GM12878 (cell line): ENCODE measurements at regions of chr7 and their contacts with region 1.

Region 1: GRCh38 chr7:49001610-49002033 is 77.3 kb downstream of the CDC14C start:
- DNase-seq: peak; percentile 24
- ATAC-seq: peak; percentile 99
- H3K4me3 ChIP-seq: no peak overlapping the region
- H3K27ac ChIP-seq: no peak overlapping the region
- H3K4me1 ChIP-seq: no peaks in the 10 kb centered on the region
- H3K27me3 ChIP-seq: no peaks in the 10 kb centered on the region
- CTCF ChIP-seq: peak; percentile 67 to 74 (median 72); a peak in 5 of 6 replicates
- EP300 ChIP-seq: no peak
- POLR2A ChIP-seq: no peak
- RAD21 ChIP-seq: peak; percentile 79

Region 2: DNA sequence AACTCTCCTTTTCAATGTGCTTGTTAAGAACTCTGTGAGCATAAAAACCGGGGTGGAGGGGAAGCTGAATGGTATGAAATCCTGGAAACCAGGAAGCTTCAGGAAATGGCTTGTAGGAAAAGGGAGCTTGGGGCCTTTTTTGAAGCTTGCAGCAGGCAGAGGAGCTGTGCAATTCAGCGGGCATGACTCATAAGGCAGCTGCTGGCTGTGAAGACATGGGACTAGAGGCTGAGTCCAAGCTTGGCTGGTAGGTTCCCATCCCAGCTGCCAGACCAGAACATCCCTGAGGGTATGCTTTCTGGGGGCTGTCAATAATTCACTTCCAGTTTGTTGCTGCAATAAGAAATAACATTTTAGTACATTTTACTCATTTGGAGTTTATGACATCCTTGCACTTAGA is 114.1 kb before region 1 on chr7:
- CTCF ChIA-PET with region 1: no interaction called
- POLR2A ChIA-PET with region 1: no interaction called
- RAD21 ChIA-PET with region 1: no interaction called
- SMC1A ChIA-PET with region 1: no interaction called
- in situ Hi-C with region 1: no loop called
- intact Hi-C with region 1: no loop called
- DNase-seq: no peak
- ATAC-seq: no peak
- H3K4me3 ChIP-seq: no peak overlapping the region
- H3K27ac ChIP-seq: no peak overlapping the region
- H3K4me1 ChIP-seq: no peaks in the 10 kb centered on the region
- H3K27me3 ChIP-seq: no peaks in the 10 kb centered on the region
- CTCF ChIP-seq: no peak
- EP300 ChIP-seq: no peak
- POLR2A ChIP-seq: no peak
- RAD21 ChIP-seq: no peak

Region 3: GRCh38 chr7:49023345-49024328 is 22.0 kb after region 1 on chr7:
- CTCF ChIA-PET with region 1: interaction called, 12 read pairs
- POLR2A ChIA-PET with region 1: no interaction called
- RAD21 ChIA-PET with region 1: no interaction called
- SMC1A ChIA-PET with region 1: no interaction called
- in situ Hi-C with region 1: no loop called
- intact Hi-C with region 1: no loop called
- DNase-seq: no peak
- ATAC-seq: no peak
- H3K4me3 ChIP-seq: no peak overlapping the region
- H3K27ac ChIP-seq: no peak overlapping the region
- H3K4me1 ChIP-seq: no peaks in the 10 kb centered on the region
- H3K27me3 ChIP-seq: no peaks in the 10 kb centered on the region
- CTCF ChIP-seq: no peak
- EP300 ChIP-seq: no peak
- POLR2A ChIP-seq: no peak
- RAD21 ChIP-seq: no peak

Region 4: DNA sequence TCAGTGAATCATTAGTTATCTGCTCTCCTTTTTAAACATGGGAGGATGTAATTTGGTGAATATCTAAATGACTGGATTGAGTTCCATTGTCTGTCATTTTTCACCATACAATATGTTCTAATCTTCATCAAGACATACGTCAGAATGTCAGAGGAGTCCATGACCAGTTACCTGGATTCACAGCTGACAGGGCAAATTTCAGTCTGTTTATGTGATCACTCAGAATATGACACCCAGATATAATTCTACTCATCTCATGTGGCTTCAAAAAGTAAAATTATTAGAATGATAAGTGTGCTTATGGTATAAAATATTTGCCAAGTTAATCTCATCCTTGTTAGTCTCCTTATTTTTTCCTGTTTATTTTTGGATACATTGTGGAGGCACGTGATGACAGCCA is 72.9 kb after region 1 on chr7:
- CTCF ChIA-PET with region 1: no interaction called
- POLR2A ChIA-PET with region 1: no interaction called
- RAD21 ChIA-PET with region 1: no interaction called
- SMC1A ChIA-PET with region 1: no interaction called
- in situ Hi-C with region 1: no loop called
- intact Hi-C with region 1: no loop called
- DNase-seq: no peak
- ATAC-seq: no peak
- H3K4me3 ChIP-seq: no peak overlapping the region
- H3K27ac ChIP-seq: no peak overlapping the region
- H3K4me1 ChIP-seq: no peaks in the 10 kb centered on the region
- H3K27me3 ChIP-seq: no peaks in the 10 kb centered on the region
- CTCF ChIP-seq: no peak
- EP300 ChIP-seq: no peak
- POLR2A ChIP-seq: no peak
- RAD21 ChIP-seq: no peak

Region 5: GRCh38 chr7:49166441-49166840 is 164.8 kb after region 1 on chr7:
- CTCF ChIA-PET with region 1: interaction called, 16 read pairs
- POLR2A ChIA-PET with region 1: no interaction called
- RAD21 ChIA-PET with region 1: no interaction called
- SMC1A ChIA-PET with region 1: interaction called, 4 read pairs
- in situ Hi-C with region 1: no loop called
- intact Hi-C with region 1: loop called (anchors 1 kb)
- DNase-seq: no peak
- ATAC-seq: peak; percentile 38; the same call in 2 of the 3 replicates
- H3K4me3 ChIP-seq: no peak overlapping the region
- H3K27ac ChIP-seq: no peak overlapping the region
- H3K4me1 ChIP-seq: no peaks in the 10 kb centered on the region
- H3K27me3 ChIP-seq: no peaks in the 10 kb centered on the region
- CTCF ChIP-seq: peak; percentile 5 to 12 (median 7); a peak in 1 of 6 replicates
- EP300 ChIP-seq: no peak
- POLR2A ChIP-seq: no peak
- RAD21 ChIP-seq: 0 out of 2 replicates have a peak, but pooled peaks have one; percentile 10

Region 6: GRCh38 chr7:49187543-49188268 is 186.1 kb after region 1 on chr7:
- CTCF ChIA-PET with region 1: interaction called, 10 read pairs
- POLR2A ChIA-PET with region 1: no interaction called
- RAD21 ChIA-PET with region 1: no interaction called
- SMC1A ChIA-PET with region 1: interaction called, 3 read pairs
- in situ Hi-C with region 1: no loop called
- intact Hi-C with region 1: no loop called
- DNase-seq: no peak
- ATAC-seq: no peak
- H3K4me3 ChIP-seq: no peak overlapping the region
- H3K27ac ChIP-seq: no peak overlapping the region
- H3K4me1 ChIP-seq: peaks cover 4% of the 10 kb centered on the region; the same call in 1 of the 2 replicates
- H3K27me3 ChIP-seq: no peaks in the 10 kb centered on the region
- CTCF ChIP-seq: peak; percentile 10 to 25 (median 13); a peak in 2 of 6 replicates
- EP300 ChIP-seq: no peak
- POLR2A ChIP-seq: no peak
- RAD21 ChIP-seq: no peak

Region 7: GRCh38 chr7:49324707-49325106 is 323.1 kb after region 1 on chr7:
- CTCF ChIA-PET with region 1: no interaction called
- POLR2A ChIA-PET with region 1: no interaction called
- RAD21 ChIA-PET with region 1: no interaction called
- SMC1A ChIA-PET with region 1: no interaction called
- in situ Hi-C with region 1: no loop called
- intact Hi-C with region 1: loop called (anchors 5 kb)
- DNase-seq: no peak
- ATAC-seq: peak; percentile 22; the same call in 2 of the 3 replicates
- H3K4me3 ChIP-seq: no peak overlapping the region
- H3K27ac ChIP-seq: no peak overlapping the region
- H3K4me1 ChIP-seq: peaks cover 4% of the 10 kb centered on the region
- H3K27me3 ChIP-seq: no peaks in the 10 kb centered on the region
- CTCF ChIP-seq: no peak
- EP300 ChIP-seq: no peak
- POLR2A ChIP-seq: no peak
- RAD21 ChIP-seq: no peak

Region 8: DNA sequence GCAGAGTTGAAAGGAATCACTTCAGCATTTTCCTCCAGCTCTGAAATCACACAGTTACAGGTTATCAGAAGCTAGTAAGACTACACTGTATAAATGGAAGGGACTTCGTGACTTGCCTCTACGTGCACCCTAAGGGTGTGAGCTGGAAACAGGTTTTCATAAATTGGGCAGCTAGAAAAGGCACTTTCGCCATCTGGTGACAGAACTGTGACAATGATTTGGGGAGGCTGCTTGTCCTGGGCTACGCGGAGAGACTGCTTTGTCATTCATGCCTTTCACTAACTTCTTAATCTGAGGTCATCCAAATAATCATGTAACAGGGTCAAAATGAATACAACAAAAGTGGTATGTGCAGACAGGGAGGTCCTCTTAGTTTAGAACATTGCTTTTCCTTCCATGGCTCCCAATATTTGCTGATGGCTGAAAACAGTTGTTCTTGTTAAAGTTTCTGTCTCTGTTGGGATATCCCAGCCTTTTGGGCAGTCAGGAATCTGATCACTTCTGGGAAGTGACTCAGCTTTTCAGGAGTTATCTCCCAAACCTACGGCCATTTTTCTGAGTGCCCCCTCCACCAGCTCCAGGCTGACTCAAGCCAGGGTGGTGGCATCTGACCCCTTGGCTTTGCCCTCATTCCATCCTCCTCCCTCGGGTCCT is 789.6 kb after region 1 on chr7:
- CTCF ChIA-PET with region 1: interaction called, 6 read pairs
- POLR2A ChIA-PET with region 1: no interaction called
- RAD21 ChIA-PET with region 1: interaction called, 8 read pairs
- SMC1A ChIA-PET with region 1: no interaction called
- in situ Hi-C with region 1: no loop called
- intact Hi-C with region 1: loop called (anchors 5 kb)
- DNase-seq: no peak
- ATAC-seq: peak; percentile 95
- H3K4me3 ChIP-seq: no peak overlapping the region
- H3K27ac ChIP-seq: no peak overlapping the region
- H3K4me1 ChIP-seq: no peaks in the 10 kb centered on the region
- H3K27me3 ChIP-seq: no peaks in the 10 kb centered on the region; a peak in 1 of 4 replicates
- CTCF ChIP-seq: peak; percentile 62 to 85 (median 70)
- EP300 ChIP-seq: no peak
- POLR2A ChIP-seq: no peak
- RAD21 ChIP-seq: peak; percentile 91

Region 9: GRCh38 chr7:49852619-49853462 is 851.2 kb after region 1 on chr7:
- CTCF ChIA-PET with region 1: interaction called, 3 read pairs
- POLR2A ChIA-PET with region 1: no interaction called
- RAD21 ChIA-PET with region 1: no interaction called
- SMC1A ChIA-PET with region 1: no interaction called
- in situ Hi-C with region 1: no loop called
- intact Hi-C with region 1: loop called (anchors 2 kb)
- DNase-seq: no peak
- ATAC-seq: peak; percentile 88
- H3K4me3 ChIP-seq: no peak overlapping the region
- H3K27ac ChIP-seq: no peak overlapping the region
- H3K4me1 ChIP-seq: no peaks in the 10 kb centered on the region
- H3K27me3 ChIP-seq: peaks cover 0 to 3% of the 10 kb centered on the region in 2 experiments; a peak in 1 of 4 replicates
- CTCF ChIP-seq: peak; percentile 86 to 91 (median 86)
- EP300 ChIP-seq: no peak
- POLR2A ChIP-seq: no peak
- RAD21 ChIP-seq: peak; percentile 97